ENCODE measurements at regions of chr21 and their contacts with region 1.

Region 1: DNA sequence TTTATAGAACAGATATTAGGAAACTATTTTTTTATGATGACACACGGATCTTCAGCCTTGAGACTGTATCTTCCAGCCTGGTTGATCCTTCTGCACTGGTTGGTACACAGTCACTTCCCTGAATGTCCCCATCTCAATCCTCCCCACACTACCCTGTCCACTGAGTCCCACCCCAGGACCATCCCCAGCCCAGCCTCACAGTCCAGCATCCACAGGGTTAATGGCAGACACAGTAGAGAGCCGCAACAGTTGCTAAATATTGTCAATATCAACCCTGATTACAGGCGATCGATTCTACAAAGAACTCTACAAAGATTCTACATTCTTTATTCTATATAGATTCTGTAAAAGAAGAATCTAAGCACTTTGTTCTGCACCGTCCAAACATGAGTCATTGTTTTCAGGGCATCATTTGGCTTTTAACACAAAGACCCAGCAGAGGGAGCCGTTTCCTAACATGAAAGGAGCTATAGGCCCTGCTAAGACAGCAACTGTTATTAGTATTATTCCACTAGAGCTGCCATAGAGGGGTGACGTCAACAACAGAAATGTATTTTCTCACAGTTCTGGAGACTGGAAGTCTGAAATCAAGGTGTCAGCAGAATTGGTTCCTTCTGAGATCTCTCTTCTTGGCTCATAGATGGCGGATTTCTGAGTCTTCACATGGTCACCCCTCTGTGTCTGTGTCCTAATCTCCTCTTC is 30.1 kb upstream of the IFNAR2 start:
- DNase-seq: peak; percentile 88
- ATAC-seq: peak; percentile 87
- H3K4me3 Mint-ChIP-seq: no peak overlapping the region
- H3K27ac Mint-ChIP-seq: no peak overlapping the region
- H3K4me1 Mint-ChIP-seq: peaks cover 29% of the 10 kb centered on the region
- H3K27me3 Mint-ChIP-seq: no peaks in the 10 kb centered on the region

Region 2: GRCh38 chr21:32940079-32941014 is 259.3 kb before region 1 on chr21:
- CTCF ChIA-PET with region 1: interaction called, 17 read pairs
- POLR2A ChIA-PET with region 1: no interaction called
- intact Hi-C with region 1: loop called (anchors 1 kb)
- DNase-seq: peak; percentile 56
- ATAC-seq: peak; percentile 74
- H3K4me3 Mint-ChIP-seq: no peak overlapping the region
- H3K27ac Mint-ChIP-seq: no peak overlapping the region
- H3K4me1 Mint-ChIP-seq: peaks cover 4% of the 10 kb centered on the region
- H3K27me3 Mint-ChIP-seq: no peaks in the 10 kb centered on the region

Region 3: GRCh38 chr21:33185852-33186251 is 13.8 kb before region 1 on chr21:
- CTCF ChIA-PET with region 1: interaction called, 42 read pairs
- POLR2A ChIA-PET with region 1: no interaction called
- intact Hi-C with region 1: no loop called
- DNase-seq: no peak
- ATAC-seq: peak; percentile 94
- H3K4me3 Mint-ChIP-seq: no peak overlapping the region
- H3K27ac Mint-ChIP-seq: peak overlapping the region; percentile 81
- H3K4me1 Mint-ChIP-seq: peaks cover 50% of the 10 kb centered on the region
- H3K27me3 Mint-ChIP-seq: no peaks in the 10 kb centered on the region

Region 4: GRCh38 chr21:33314111-33314510 is 114.4 kb after region 1 on chr21:
- CTCF ChIA-PET with region 1: interaction called, 13 read pairs
- POLR2A ChIA-PET with region 1: no interaction called
- intact Hi-C with region 1: no loop called
- DNase-seq: no peak
- ATAC-seq: no peak
- H3K4me3 Mint-ChIP-seq: no peak overlapping the region
- H3K27ac Mint-ChIP-seq: no peak overlapping the region
- H3K4me1 Mint-ChIP-seq: peaks cover 5% of the 10 kb centered on the region
- H3K27me3 Mint-ChIP-seq: no peaks in the 10 kb centered on the region

Region 5: GRCh38 chr21:33380483-33380998 is 180.9 kb after region 1 on chr21:
- CTCF ChIA-PET with region 1: interaction called, 12 read pairs
- POLR2A ChIA-PET with region 1: no interaction called
- intact Hi-C with region 1: no loop called
- DNase-seq: peak; percentile 96
- ATAC-seq: peak; percentile 85
- H3K4me3 Mint-ChIP-seq: peak overlapping the region; percentile 19
- H3K27ac Mint-ChIP-seq: peak overlapping the region; percentile 88
- H3K4me1 Mint-ChIP-seq: peaks cover 62% of the 10 kb centered on the region
- H3K27me3 Mint-ChIP-seq: peaks cover 4% of the 10 kb centered on the region

Measured in activated CD4-positive, alpha-beta T cell treated with anti-CD3 and anti-CD28 coated beads for 36 hours (primary cell).